ENCODE measurements at regions of chr7 and their contacts with region 1.

Region 1: DNA sequence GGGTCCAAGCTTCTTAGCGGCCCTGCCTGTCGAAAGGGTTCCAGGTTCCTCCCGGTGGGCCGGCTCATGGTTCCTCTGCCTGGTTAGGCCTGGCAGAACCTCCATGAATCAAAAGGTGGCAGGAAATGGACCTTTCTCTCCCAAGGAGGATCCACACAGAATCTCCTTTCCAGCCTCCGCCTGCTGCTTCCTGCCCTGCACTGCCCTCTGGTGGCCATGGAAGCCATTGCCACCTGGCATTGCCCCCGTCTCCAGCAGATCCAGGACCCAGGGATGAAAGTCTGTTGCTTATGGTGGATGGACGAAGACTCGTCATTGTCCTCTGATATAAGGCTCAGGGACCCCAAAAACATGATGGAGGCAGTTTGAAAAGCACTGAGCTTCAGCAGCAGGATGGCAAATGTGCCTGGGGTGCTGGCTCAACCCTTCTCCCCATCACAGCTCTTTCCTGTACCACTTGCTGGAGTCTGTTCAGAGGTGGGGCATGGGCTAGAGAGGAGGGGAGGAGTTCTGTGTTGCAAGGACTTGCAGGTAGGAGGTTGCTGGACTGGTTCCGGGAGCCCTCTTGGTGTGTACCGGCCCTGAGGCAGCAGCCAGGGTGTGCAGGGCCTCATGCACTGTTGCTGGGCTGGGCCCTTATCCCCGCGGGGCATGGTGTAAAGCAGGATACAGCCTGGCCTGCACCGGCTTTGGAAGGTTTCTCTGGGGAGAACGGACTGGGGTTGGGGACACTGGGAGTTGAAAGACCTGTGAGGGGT is 11.3 kb upstream of the INMT start:
- DNase-seq: peak; percentile 87
- ATAC-seq: peak; percentile 56
- H3K4me3 Mint-ChIP-seq: no peak overlapping the region
- H3K27ac Mint-ChIP-seq: no peak overlapping the region
- H3K4me1 Mint-ChIP-seq: peaks cover 43% of the 10 kb centered on the region
- H3K27me3 Mint-ChIP-seq: no peaks in the 10 kb centered on the region

Region 2: GRCh38 chr7:30276203-30276900 is 464.3 kb before region 1 on chr7:
- CTCF ChIA-PET with region 1: interaction called, 5 read pairs
- POLR2A ChIA-PET with region 1: no interaction called
- intact Hi-C with region 1: loop called in 1 of 2 experiments (anchors 10 kb)
- DNase-seq: peak; percentile 69
- ATAC-seq: peak; percentile 87
- H3K4me3 Mint-ChIP-seq: no peak overlapping the region
- H3K27ac Mint-ChIP-seq: no peak overlapping the region
- H3K4me1 Mint-ChIP-seq: peaks cover 6% of the 10 kb centered on the region
- H3K27me3 Mint-ChIP-seq: no peaks in the 10 kb centered on the region

Region 3: DNA sequence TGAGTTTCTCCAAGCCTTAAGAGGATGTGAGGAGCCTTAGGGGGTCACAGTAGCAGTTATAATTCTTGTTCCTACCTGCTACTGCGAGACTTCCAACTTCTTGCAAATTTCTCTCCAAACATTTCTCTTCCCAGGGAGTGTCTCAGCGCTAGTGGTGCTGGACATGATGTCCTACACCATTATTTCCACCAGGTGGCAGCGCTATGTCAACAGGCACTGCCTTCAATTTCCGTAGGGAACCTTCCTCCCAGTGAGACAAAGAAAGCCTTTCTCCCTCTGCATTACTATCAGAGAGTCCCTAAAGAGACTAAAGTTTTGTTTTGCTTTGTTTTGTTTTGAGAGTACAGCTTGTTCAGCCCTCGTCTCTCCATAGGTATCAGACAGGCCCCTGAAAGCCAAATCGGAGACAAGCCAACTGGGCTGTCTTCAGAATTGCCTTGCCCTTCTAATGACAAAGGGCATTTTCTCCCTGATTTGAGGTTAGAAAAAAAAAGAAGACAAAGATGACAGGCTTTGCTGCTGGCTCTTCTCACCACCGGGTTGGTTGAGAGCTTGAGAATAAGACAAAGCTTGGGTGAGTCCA is 191.8 kb before region 1 on chr7:
- CTCF ChIA-PET with region 1: interaction called, 35 read pairs
- POLR2A ChIA-PET with region 1: no interaction called
- intact Hi-C with region 1: loop called (anchors 1 kb)
- DNase-seq: peak; percentile 62
- ATAC-seq: peak; percentile 75
- H3K4me3 Mint-ChIP-seq: no peak overlapping the region
- H3K27ac Mint-ChIP-seq: no peak overlapping the region
- H3K4me1 Mint-ChIP-seq: peaks cover 12% of the 10 kb centered on the region
- H3K27me3 Mint-ChIP-seq: no peaks in the 10 kb centered on the region

Region 4: DNA sequence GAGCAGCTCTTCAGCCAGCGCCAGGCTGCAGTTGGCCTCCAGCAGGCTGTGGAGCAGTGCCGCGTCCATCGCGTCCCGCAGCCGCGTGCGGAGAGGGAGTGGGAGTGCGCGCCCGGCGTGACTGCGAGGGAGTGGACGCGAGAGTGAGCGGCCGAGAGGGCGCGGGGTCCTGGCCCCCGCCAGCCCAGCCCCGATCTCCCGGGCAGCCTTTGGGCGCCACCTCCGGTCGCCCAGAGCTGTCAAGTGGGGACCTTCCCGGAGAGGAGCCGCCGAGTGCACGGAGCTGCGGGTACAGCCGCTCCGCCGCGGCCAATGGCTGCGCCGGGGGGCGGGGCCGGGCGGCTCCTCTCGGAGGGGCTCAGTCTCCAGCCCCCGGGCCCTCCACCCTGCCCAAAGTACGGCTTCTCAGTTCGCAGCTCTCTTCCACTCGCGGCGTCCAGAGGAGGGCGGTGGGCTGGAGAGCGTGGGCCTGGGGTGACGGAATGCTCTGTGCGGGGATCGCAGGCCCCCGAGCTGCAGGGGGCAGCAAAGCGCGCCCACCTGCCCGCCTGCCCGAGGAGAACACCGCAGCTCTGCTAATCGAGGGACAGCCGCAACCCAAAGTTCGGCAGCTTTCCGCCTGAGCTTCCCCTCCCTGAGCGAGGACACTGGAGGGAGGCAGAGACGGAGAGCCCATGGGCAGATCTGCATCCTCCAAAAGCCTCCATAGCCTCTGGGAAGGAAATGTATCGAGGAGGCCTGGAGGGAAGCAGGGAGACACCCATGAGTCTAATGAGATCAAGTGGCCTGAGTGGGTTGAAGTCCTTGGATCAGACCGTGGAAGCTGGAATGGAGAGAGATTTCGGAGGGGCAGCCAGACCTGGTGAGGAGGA is 58.2 kb before region 1 on chr7 and contains the start of gene CRHR2:
- CTCF ChIA-PET with region 1: interaction called, 14 read pairs
- POLR2A ChIA-PET with region 1: no interaction called
- intact Hi-C with region 1: loop called (anchors 1 to 5 kb)
- DNase-seq: peak; percentile 61
- ATAC-seq: peak; percentile 90
- H3K4me3 Mint-ChIP-seq: peak within 1 kb of the TSS; percentile 46
- H3K27ac Mint-ChIP-seq: no peak within 1 kb of the TSS
- H3K4me1 Mint-ChIP-seq: peaks cover 7% of the 10 kb centered on the region
- H3K27me3 Mint-ChIP-seq: peaks cover 42% of the 10 kb centered on the region
- total RNA-seq, gene CRHR2: not detected

Region 5: GRCh38 chr7:30717181-30717580 is 23.4 kb before region 1 on chr7:
- CTCF ChIA-PET with region 1: interaction called, 17 read pairs
- POLR2A ChIA-PET with region 1: no interaction called
- intact Hi-C with region 1: no loop called
- DNase-seq: no peak
- ATAC-seq: peak; percentile 53
- H3K4me3 Mint-ChIP-seq: no peak overlapping the region
- H3K27ac Mint-ChIP-seq: no peak overlapping the region
- H3K4me1 Mint-ChIP-seq: no peaks in the 10 kb centered on the region
- H3K27me3 Mint-ChIP-seq: no peaks in the 10 kb centered on the region

Region 6: GRCh38 chr7:30761214-30762156 is 20.9 kb after region 1 on chr7:
- CTCF ChIA-PET with region 1: interaction called, 11 read pairs
- POLR2A ChIA-PET with region 1: no interaction called
- intact Hi-C with region 1: no loop called
- DNase-seq: no peak
- ATAC-seq: no peak
- H3K4me3 Mint-ChIP-seq: no peak overlapping the region
- H3K27ac Mint-ChIP-seq: no peak overlapping the region
- H3K4me1 Mint-ChIP-seq: no peaks in the 10 kb centered on the region
- H3K27me3 Mint-ChIP-seq: peaks cover 1% of the 10 kb centered on the region

Region 7: GRCh38 chr7:30813466-30813865 is 72.9 kb after region 1 on chr7:
- CTCF ChIA-PET with region 1: no interaction called
- POLR2A ChIA-PET with region 1: no interaction called
- intact Hi-C with region 1: no loop called
- DNase-seq: no peak
- ATAC-seq: no peak
- H3K4me3 Mint-ChIP-seq: no peak overlapping the region
- H3K27ac Mint-ChIP-seq: no peak overlapping the region
- H3K4me1 Mint-ChIP-seq: no peaks in the 10 kb centered on the region
- H3K27me3 Mint-ChIP-seq: no peaks in the 10 kb centered on the region